ENCODE measurements at regions of chr3 and their contacts with region 1.

Region 1: DNA sequence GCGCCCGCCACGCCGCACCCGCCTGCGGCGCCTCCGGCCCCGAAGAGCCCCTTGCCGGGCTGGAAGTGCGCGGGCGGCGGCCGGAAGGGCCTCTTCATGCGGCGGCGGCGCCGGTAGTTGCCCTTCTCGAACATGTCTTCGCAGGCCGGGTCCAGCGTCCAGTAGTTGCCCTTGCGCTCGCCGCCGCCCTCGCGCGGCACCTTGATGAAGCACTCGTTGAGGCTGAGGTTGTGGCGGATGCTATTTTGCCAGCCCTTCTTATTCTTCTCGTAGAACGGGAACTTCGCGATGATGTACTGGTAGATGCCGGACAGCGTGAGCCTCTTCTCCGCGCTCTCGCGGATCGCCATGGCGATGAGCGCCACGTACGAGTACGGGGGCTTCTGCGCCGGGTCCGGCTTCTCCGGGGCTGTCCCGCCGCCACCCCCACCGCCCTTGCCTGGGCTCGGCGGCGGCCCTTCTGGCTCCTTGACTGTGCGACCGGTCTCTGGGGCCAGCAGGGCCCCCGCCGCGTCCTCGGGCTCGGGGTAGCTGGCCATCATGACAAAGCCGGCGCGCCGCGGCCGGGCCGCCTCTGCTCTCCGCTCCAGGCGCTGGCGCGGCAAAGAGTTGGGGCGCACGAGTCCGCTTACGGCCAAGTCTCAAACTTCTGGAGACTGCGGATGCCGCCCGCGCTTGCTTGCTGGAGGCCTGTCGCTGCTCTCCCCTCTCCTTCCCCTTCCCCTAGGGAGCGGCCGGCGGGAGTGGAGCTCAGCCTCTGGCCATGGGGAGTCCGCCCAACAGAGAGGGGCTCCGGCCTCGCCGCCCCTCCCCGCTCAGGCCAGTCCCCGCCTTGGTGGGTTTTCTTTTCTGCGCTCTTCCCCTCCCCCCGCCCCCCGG is 517 bp downstream of the FOXL2 start:
- DNase-seq: peak; percentile 52 to 74 (median 67)
- H3K4me3 ChIP-seq: peak overlapping the region; percentile 20 to 67 (median 38)
- H3K27ac ChIP-seq: peak overlapping the region in 1 of 2 experiments; percentile 5
- H3K4me1 ChIP-seq: peaks cover 0 to 47% (median 38%) of the 10 kb centered on the region in 4 experiments
- H3K27me3 ChIP-seq: peaks cover 19 to 99% (median 71%) of the 10 kb centered on the region in 5 experiments

Region 2: GRCh38 chr3:138935848-138936740 is 10.3 kb before region 1 on chr3:
- CTCF ChIA-PET with region 1: interaction called, 20 read pairs
- POLR2A ChIA-PET with region 1: no interaction called
- DNase-seq: peak; percentile 59 to 72 (median 70)
- H3K4me3 ChIP-seq: peak overlapping the region; percentile 40 to 76 (median 58)
- H3K27ac ChIP-seq: no peak overlapping the region
- H3K4me1 ChIP-seq: peaks cover 2 to 46% (median 36%) of the 10 kb centered on the region in 4 experiments
- H3K27me3 ChIP-seq: peaks cover 4 to 76% (median 48%) of the 10 kb centered on the region in 5 experiments

Region 3: GRCh38 chr3:138960417-138960852 is 14.0 kb after region 1 on chr3:
- CTCF ChIA-PET with region 1: interaction called, 20 read pairs
- POLR2A ChIA-PET with region 1: interaction called, 3 read pairs
- DNase-seq: peak in 1 of 3 donors; percentile 18
- H3K4me3 ChIP-seq: peak overlapping the region in 6 of 7 experiments; percentile 7 to 68 (median 53)
- H3K27ac ChIP-seq: no peak overlapping the region
- H3K4me1 ChIP-seq: peaks cover 0 to 12% (median 9%) of the 10 kb centered on the region in 4 experiments
- H3K27me3 ChIP-seq: peaks cover 0 to 43% (median 12%) of the 10 kb centered on the region in 5 experiments